Activated T-helper 2 cell treated with anti-CD3 and anti-CD28 coated beads, Interferon-gamma antibody, Interleukin-2, Interleukin-4, amounts not matched to agents 10 μg/mL and 5 μg/mL and 100 μg/mL, durations not matched to agents 14 hours and 24 hours and 36 hours (primary cell): ENCODE measurements at regions of chr19 and their contacts with region 1.

Region 1: DNA sequence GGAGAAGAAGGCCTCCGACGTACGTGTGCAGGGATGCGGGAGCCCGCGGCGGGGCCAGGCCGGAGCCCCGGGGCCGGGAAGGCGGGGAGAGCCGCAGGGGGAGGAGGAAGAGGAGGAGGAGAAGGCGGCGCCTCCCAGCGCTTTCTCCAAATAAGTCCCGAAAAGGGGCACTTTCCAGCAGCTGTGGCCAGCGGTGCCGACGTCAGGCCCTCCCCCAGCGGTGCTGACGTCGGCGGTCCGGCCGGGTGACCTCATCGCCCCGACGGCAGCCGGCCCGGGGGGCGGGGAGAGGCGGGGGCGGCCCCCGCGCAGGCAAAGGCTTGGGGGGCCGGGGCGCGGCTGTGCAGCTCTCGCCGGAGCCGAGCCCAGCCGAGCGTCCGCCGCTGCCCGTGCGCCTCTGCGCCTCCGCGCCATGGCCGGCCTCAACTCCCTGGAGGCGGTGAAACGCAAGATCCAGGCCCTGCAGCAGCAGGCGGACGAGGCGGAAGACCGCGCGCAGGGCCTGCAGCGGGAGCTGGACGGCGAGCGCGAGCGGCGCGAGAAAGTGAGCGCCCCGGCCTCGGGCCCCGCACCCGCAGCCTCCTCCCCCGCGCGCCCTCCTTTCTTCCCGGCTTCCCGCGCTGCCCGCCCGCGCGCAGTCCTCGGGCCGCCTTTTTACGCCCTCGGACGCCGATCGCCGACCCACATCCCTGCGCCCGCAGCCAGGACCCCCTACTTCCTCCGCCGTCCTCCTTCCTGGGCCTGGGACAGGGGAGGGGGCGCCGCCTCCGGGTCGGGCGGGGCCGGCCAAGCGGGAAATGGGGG is at the start of gene TPM4:
- DNase-seq: peak; percentile 85
- H3K4me3 Mint-ChIP-seq: peak within 1 kb of the TSS; percentile 95
- H3K27ac Mint-ChIP-seq: peak within 1 kb of the TSS; percentile 96
- H3K4me1 Mint-ChIP-seq: peaks cover 50% of the 10 kb centered on the region
- H3K27me3 Mint-ChIP-seq: no peaks in the 10 kb centered on the region
- total RNA-seq, gene TPM4: 507 and 520 TPM in 2 replicates

Region 2: GRCh38 chr19:15466851-15467733 is 609.3 kb before region 1 on chr19:
- intact Hi-C with region 1: loop called (anchors 10 kb)
- DNase-seq: peak; percentile 69
- H3K4me3 Mint-ChIP-seq: peak overlapping the region; percentile 43
- H3K27ac Mint-ChIP-seq: peak overlapping the region; percentile 85
- H3K4me1 Mint-ChIP-seq: peaks cover 49% of the 10 kb centered on the region
- H3K27me3 Mint-ChIP-seq: peaks cover 14% of the 10 kb centered on the region

Region 3: GRCh38 chr19:16062789-16063188 is 13.6 kb before region 1 on chr19:
- intact Hi-C with region 1: no loop called
- DNase-seq: peak; percentile 56
- H3K4me3 Mint-ChIP-seq: no peak overlapping the region
- H3K27ac Mint-ChIP-seq: no peak overlapping the region
- H3K4me1 Mint-ChIP-seq: peaks cover 19% of the 10 kb centered on the region
- H3K27me3 Mint-ChIP-seq: peaks cover 2% of the 10 kb centered on the region

Region 4: GRCh38 chr19:16095071-16095571 is 18.8 kb after region 1 on chr19:
- intact Hi-C with region 1: loop called (anchors 1 kb)
- DNase-seq: no peak
- H3K4me3 Mint-ChIP-seq: peak overlapping the region; percentile 38
- H3K27ac Mint-ChIP-seq: peak overlapping the region; percentile 87
- H3K4me1 Mint-ChIP-seq: peaks cover 31% of the 10 kb centered on the region
- H3K27me3 Mint-ChIP-seq: no peaks in the 10 kb centered on the region

Region 5: DNA sequence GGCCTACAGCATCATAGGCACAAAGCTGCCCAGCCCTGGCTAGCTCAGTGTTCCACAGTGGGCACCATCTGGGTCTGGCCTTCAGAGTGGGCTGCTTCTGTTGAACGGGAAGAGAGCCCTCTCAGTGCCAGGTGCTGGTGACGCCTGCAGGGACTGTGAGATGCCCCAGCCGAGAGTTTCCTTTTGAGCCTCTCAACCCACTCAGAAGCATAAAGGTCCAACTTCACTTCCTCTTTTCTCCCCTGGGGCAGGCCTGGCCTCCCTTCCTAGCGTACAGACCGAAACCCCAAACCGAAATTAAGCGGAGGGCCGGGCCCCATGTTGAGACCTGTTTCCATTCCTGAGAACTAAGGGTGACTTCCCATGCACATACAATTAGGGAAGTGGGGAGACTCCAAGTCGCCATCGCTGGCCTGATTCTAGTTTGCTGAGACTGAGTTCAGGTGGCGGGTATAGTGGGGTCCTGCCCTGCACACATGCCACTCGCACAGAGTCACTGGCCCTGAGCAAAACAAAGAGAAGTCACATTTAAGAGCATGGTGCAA is 42.2 kb after region 1 on chr19:
- intact Hi-C with region 1: loop called (anchors 1 kb)
- DNase-seq: peak; percentile 45
- H3K4me3 Mint-ChIP-seq: peak overlapping the region; percentile 72
- H3K27ac Mint-ChIP-seq: peak overlapping the region; percentile 95
- H3K4me1 Mint-ChIP-seq: peaks cover 54% of the 10 kb centered on the region
- H3K27me3 Mint-ChIP-seq: no peaks in the 10 kb centered on the region

Region 6: DNA sequence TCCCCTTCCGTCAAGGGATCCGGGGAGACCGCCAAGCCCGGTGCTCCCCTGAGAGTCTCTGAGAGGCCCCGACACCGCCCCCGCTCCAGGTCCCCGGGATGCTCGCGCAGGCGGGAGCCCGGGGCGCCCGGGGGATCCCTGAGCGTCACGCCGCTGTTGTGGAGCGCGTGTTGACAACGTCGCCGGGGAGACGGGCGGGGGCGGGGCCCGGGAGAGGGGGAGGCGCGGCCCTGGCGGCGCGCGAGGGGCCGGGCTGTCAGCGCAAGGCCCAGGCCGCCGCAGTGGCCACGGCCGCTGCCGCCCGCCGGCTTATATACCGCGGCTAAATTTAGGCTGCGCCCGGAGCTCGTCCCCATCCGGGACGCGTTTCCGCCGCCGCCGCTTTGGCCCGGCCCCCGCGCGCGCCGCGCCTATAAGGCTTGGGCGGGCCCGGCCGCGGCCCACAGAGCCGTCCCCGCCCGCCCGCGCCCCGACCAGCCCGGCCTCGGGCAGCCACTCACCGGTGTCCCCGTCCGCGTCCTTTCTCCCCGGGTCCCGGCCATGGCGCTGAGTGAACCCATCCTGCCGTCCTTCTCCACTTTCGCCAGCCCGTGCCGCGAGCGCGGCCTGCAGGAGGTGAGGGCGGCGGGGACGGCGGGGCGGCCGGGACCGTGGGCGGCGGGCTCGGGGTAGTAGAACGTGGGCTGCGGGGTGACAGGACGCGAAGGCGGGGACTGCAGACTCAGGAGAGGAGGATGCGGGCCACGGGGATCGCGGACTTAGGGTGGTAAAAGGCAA is 248.2 kb after region 1 on chr19 and contains the start of gene KLF2:
- intact Hi-C with region 1: loop called (anchors 5 kb)
- DNase-seq: peak; percentile 91
- H3K4me3 Mint-ChIP-seq: peak within 1 kb of the TSS; percentile 39
- H3K27ac Mint-ChIP-seq: no peak within 1 kb of the TSS
- H3K4me1 Mint-ChIP-seq: peaks cover 38% of the 10 kb centered on the region
- H3K27me3 Mint-ChIP-seq: peaks cover 34% of the 10 kb centered on the region
- total RNA-seq, gene KLF2: 2.4 and 2.7 TPM in 2 replicates